A549 (cell line): ENCODE measurements at regions of chr17 and their contacts with region 1.

Region 1: DNA sequence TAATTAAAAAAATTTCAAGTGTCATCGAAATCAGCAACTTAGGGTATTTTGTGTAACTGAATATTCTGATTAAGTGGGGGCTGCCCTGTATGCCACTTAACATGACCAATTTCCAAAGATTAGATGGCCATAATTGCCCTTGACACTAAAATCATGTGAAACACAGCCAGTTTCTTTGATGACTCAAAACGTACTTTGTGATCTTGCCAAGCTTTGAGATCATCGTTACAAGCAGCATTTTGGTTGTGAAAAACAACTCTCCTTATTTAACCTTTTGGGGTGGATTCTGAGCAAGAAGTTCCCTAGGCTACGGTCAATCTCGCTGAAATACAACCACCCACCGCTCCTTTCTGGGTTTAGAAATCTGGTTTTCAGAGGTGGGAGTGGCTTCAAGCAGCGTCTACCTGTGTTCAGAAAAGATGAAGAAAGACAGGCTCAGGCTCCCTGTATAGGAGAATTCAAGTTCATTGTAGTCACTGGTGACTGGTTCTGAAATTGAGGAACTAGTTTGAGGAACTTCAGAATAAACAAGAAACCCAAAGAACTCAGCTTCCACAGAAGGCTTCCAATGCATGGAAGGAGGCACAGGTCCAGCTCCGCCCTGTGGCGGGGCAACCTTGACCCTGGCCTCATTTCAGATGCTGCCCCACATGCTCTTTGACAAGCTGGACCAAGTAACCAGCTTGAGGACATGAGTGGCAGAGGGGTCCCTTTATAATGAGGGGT is 9.4 kb downstream of the MAP3K14 start:
- DNase-seq: peak in 1 of 2 experiments; percentile 69
- ATAC-seq: peak; percentile 16 to 28; a peak in 5 of 6 replicates
- H3K4me3 ChIP-seq: peak overlapping the region; percentile 10; the same call in 1 of the 3 replicates
- H3K27ac ChIP-seq: peak overlapping the region; percentile 77 to 92
- H3K4me1 ChIP-seq: peaks cover 92% of the 10 kb centered on the region
- CTCF ChIP-seq: no peak
- EP300 ChIP-seq: no peak
- POLR2A ChIP-seq: no peak
- RAD21 ChIP-seq: no peak

Region 2: DNA sequence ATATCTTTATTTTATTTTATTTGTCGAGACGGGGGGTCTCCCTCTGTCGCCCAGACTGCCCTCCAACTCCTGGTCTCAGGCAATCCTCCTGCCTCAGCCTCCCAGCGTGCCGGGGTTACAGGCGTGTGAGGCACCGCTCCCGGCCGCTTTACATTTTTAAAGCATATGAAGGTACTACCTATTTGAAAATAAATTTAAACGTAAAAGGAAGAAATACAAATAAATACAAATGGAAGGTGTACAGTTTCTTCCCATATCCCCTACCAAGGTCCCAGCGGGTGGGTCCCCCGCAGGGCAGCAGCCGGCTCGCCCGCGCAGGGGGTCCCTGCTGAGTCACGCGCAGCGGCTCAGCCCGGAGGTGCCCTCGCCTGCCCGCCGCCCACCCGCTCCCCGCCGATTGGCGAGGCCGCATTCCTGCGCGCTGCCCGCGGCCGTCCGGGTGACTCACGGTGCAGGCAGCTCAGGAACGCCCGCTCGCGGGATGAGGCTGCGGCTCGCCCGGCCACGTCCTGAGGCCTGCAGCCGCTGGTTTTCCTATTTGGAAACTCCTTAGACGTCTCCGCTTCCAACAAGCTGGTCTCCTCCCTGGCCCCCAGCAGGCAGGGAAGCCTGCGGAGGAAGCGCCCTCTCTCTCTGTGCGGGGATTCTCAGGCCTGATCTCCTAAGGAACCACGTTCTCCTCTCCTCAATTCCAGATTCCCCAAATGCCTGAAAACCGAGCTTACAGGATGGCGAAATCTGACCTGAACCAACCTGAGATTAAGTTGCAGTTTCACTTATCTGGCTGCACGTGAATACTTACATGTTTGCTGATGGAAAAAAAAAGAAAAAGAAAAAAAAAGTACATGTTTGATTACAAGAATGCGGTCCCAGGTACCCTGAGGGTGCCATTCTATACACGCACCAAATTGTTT is 64.2 kb after region 1 on chr17:
- CTCF ChIA-PET with region 1: interaction called, 24 read pairs
- POLR2A ChIA-PET with region 1: interaction called, 7 read pairs
- DNase-seq: peak; percentile 98
- ATAC-seq: peak; percentile 93 to 95
- H3K4me3 ChIP-seq: no peak overlapping the region; the same call in 2 of the 3 replicates
- H3K27ac ChIP-seq: peak overlapping the region; percentile 95 to 97
- H3K4me1 ChIP-seq: peaks cover 84% of the 10 kb centered on the region
- CTCF ChIP-seq: no peak; the same call in 1 of the 3 replicates
- EP300 ChIP-seq: peak; percentile 97 to 99
- POLR2A ChIP-seq: no peak; the same call in 1 of the 2 replicates
- RAD21 ChIP-seq: peak; percentile 44 to 71; a peak in 4 of 5 replicates

Region 3: DNA sequence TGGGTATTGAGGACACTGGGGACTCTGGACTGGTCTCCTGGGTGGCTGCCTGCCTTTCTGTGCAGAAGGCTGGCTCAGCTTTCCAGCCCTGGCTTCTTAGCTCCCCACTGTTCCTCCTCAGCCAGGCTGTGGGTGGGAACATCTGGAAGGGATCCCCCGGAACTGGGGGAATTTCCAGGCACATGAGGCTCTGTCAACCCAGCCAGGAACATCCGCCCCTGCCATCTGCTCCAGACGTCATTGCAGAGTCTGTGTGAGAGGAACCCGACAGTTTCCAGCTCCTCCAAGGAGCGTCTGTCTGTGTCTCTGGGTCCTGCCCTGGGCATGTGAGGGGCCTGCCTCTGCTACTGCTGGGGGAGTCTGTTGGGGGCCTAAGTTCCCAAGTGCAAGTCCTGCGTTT is 440.5 kb after region 1 on chr17:
- CTCF ChIA-PET with region 1: no interaction called
- POLR2A ChIA-PET with region 1: no interaction called
- DNase-seq: no peak
- ATAC-seq: no peak
- H3K4me3 ChIP-seq: no peak overlapping the region
- H3K27ac ChIP-seq: no peak overlapping the region
- H3K4me1 ChIP-seq: no peaks in the 10 kb centered on the region
- CTCF ChIP-seq: no peak
- EP300 ChIP-seq: no peak
- POLR2A ChIP-seq: no peak
- RAD21 ChIP-seq: no peak